Esophagus muscularis mucosa (tissue), 4 donors: ENCODE measurements at regions of chr4 and their contacts with region 1.

Region 1: DNA sequence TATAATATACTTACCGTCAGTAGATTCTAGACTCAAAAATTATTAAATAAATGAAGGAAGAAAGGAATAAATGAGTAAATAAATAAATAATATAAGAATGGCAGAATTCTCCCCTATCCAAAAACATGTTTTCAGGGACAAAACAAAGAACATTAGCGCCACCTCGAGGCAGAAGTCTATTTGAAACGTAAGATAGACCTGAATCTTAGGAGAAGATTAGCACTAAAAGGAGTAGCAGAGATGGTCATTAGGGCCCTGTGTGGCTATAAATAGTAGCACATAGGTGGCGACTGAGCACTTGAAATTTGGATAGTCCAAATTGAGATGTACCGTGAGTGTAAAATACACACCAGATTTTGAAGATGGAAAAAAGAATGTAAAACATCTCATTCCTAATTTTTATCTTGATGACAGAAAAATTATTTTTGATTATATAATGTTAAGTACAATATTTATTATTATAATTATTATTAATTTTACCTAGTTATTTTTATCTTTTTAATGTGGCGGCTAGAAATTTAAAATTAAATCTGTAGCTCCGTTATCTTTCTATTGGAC is 24.3 kb upstream of the SRD5A3 start:
- DNase-seq: no peak
- H3K4me3 ChIP-seq: no peak overlapping the region
- H3K27ac ChIP-seq: no peak overlapping the region
- H3K4me1 ChIP-seq: peaks cover 0 to 16% (median 10%) of the 10 kb centered on the region in 4 donors
- H3K27me3 ChIP-seq: no peaks in the 10 kb centered on the region
- CTCF ChIP-seq: peak; percentile 59 to 75 (median 61)
- EP300 ChIP-seq: no peak
- POLR2A ChIP-seq: no peak

Region 2: DNA sequence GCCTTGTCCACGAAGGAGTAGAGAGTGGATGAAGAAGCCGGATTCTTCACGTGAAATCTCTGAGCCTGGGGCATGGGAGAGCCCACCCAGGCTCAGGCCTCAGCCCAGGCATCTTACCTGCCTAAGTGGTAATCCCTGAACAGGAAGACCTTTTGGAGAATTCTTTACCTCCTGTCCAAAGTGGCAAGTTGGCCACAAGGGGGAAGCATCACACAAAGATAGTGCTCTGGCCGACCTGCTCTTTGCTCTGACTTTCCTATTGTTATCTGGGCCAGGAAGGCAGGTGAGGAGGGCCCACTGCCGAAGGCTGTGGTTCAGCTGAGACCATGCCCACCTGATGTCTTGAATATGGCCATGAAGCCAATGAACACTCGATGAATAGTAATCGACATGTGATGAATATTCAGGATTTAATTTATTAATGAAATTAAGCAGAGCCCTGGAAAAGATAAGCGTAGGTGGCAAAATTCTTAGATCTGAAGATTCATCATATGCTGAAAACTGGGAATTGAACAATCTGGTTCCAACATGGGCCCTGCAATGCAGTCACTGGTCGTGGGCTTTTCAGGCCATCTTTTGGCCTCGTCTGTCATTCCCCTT is 998.9 kb before region 1 on chr4:
- intact Hi-C with region 1: loop called (anchors 5 kb)
- DNase-seq: no peak
- H3K4me3 ChIP-seq: no peak overlapping the region
- H3K27ac ChIP-seq: no peak overlapping the region
- H3K4me1 ChIP-seq: peaks cover 0 to 6% (median 3%) of the 10 kb centered on the region in 4 donors
- H3K27me3 ChIP-seq: no peaks in the 10 kb centered on the region
- CTCF ChIP-seq: peak; percentile 67 to 79 (median 72)
- EP300 ChIP-seq: no peak
- POLR2A ChIP-seq: no peak

Region 3: DNA sequence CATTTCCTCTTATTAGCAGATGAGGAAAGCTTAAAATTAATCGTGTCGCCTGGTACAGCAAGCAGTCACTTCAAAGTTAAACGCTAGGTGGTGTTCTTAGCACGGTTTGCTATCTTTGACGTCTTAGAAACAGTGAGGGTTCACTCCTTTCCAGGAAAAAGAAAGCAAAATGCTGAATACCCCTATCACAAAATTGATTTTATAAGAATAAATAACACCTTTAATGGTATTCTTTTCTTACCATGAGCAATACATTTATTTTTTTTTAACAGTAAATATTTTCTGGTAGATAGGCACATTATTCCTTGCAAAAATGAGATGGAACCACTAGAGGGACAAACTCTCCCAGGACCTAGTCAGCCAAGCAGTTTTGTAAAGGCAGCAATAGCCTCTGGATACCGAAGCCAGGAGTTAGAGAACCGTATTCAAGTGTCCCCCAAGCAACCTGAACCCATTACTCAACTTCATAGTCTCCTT is 350.3 kb before region 1 on chr4:
- intact Hi-C with region 1: loop called (anchors 5 kb)
- DNase-seq: no peak
- H3K4me3 ChIP-seq: no peak overlapping the region
- H3K27ac ChIP-seq: no peak overlapping the region
- H3K4me1 ChIP-seq: peaks cover 0 to 40% (median 33%) of the 10 kb centered on the region in 4 donors
- H3K27me3 ChIP-seq: no peaks in the 10 kb centered on the region
- CTCF ChIP-seq: peak; percentile 71 to 74 (median 72)
- EP300 ChIP-seq: no peak
- POLR2A ChIP-seq: no peak

Region 4: DNA sequence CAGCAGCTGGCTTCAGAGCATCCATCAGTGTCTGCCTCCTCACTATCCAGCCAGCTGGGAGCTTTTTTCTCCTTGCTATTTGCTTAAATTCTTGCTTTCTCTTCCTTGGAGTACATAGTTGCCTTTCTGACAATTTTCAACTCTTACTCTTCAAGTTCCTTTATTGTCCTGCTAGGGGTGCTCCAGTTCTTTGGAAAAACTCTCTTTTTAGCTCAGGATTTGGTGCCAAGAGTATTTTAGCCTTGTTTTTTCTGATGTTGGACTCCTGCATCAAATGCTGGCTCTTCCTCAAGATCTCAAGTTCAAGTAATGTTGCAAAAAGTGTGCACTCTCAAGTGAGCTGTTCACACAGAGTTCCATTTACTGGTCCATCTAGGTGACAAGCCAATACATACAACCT is 322.8 kb before region 1 on chr4:
- intact Hi-C with region 1: loop called (anchors 2 kb)
- DNase-seq: no peak
- H3K4me3 ChIP-seq: no peak overlapping the region
- H3K27ac ChIP-seq: no peak overlapping the region
- H3K4me1 ChIP-seq: peaks cover 0 to 32% (median 24%) of the 10 kb centered on the region in 4 donors
- H3K27me3 ChIP-seq: no peaks in the 10 kb centered on the region
- CTCF ChIP-seq: peak; percentile 59 to 77 (median 72)
- EP300 ChIP-seq: no peak
- POLR2A ChIP-seq: no peak

Region 5: DNA sequence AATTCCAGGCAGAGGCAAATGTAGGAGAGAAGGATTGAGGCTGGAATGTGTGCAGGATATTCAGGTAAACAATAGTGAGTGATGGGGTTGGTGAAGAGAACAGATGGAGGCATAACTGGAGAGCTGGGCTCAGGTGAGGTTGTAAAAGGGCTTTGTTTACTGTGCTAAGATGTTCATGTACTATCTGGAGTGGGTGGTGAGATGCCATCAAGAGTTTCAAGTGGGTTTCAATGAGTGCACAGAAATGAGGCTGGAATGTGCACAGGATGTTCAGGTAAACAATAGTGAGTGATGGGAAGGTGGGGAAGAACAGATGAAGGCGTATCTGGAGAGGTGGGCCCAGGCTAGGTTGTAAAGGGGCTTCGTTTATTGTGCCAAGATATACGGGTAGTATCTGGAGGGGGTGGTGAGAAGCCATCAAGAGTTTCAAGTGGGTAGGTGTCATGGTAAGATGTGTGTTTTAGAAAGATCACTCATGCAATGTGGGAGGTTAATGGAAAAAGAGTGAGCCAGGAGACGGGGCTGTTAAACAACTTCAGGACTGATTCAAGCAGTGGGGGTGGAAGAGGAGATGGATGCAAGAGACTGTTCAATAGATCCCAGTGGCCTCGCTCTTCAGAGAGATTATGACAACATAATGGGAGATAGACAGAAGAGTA is 339.7 kb after region 1 on chr4:
- intact Hi-C with region 1: no loop called
- DNase-seq: no peak
- H3K4me3 ChIP-seq: no peak overlapping the region
- H3K27ac ChIP-seq: no peak overlapping the region
- H3K4me1 ChIP-seq: no peaks in the 10 kb centered on the region
- H3K27me3 ChIP-seq: peaks cover 0 to 7% (median 0%) of the 10 kb centered on the region in 4 donors
- CTCF ChIP-seq: no peak
- EP300 ChIP-seq: no peak
- POLR2A ChIP-seq: no peak